AG04450 (cell line): ENCODE measurements at regions of chr10 and their contacts with region 1.

Region 1: DNA sequence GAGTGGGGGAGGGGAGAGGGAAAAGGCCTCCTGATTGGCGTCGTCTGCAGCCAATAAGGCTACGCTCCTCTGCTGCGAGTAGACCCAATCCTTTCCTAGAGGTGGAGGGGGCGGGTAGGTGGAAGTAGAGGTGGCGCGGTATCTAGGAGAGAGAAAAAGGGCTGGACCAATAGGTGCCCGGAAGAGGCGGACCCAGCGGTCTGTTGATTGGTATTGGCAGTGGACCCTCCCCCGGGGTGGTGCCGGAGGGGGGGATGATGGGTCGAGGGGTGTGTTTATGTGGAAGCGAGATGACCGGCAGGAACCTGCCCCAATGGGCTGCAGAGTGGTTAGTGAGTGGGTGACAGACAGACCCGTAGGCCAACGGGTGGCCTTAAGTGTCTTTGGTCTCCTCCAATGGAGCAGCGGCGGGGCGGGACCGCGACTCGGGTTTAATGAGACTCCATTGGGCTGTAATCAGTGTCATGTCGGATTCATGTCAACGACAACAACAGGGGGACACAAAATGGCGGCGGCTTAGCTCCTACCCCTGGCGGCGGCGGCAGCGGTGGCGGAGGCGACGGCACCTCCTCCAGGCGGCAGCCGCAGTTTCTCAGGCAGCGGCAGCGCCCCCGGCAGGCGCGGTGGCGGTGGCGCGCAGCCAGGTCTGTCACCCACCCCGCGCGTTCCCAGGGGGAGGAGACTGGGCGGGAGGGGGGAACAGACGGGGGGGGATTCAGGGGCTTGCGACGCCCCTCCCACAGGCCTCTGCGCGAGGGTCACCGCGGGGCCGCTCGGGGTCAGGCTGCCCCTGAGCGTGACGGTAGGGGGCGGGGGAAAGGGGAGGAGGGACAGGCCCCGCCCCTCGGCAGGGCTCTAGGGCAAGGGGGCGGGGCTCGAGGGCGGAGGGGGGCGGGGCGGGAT is at the start of gene KAT6B:
- DNase-seq: peak; percentile 100
- H3K4me3 ChIP-seq: peak within 1 kb of the TSS; percentile 88
- H3K27ac ChIP-seq: peak within 1 kb of the TSS; percentile 65
- H3K27me3 ChIP-seq: no peaks in the 10 kb centered on the region
- CTCF ChIP-seq: peak; percentile 32
- polyA plus RNA-seq, gene KAT6B: 10.4 and 14.1 TPM in 2 replicates

Region 2: DNA sequence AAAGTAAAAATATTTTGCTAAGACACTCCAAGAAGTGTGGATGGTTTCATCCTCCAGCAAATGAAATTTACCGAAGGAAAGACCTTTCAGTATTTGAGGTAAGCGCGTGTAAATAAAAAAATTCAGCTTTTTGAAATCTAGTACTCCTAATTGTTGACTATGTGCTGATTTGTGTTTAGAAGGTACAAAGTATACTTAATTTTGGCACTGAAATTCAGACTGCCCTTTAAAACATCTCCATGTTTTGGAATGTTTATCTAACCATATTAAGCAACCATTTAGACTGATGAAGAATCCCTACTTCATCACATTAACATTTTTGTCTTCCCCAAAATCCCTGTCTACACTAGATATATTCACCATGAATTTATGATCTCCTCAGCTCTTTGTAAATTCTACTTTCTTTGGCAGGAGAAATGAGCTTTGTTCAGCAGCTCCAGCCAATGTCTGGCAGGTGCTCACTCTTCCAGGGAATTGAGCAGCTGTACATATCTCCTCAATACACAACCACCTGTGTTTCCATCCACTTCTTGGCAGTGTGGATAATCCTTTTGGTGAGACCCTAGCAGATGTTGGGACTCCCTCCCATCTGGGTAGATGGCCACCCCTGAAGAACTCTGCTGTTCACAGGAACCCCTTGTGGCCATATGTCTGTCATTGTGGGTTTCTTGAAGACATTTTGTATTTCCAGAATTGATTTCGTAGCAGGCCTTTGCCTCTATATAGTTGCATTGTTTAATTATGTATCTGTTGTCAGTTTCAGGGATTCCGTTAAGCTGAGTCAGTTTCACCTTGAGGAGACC is 155.6 kb after region 1 on chr10:
- CTCF ChIA-PET with region 1: no interaction called
- POLR2A ChIA-PET with region 1: interaction called, 12 read pairs
- DNase-seq: no peak
- H3K4me3 ChIP-seq: no peak overlapping the region
- H3K27ac ChIP-seq: no peak overlapping the region
- H3K27me3 ChIP-seq: no peaks in the 10 kb centered on the region
- CTCF ChIP-seq: no peak